ENCODE measurements at regions of chr6 and their contacts with region 1.

Region 1: DNA sequence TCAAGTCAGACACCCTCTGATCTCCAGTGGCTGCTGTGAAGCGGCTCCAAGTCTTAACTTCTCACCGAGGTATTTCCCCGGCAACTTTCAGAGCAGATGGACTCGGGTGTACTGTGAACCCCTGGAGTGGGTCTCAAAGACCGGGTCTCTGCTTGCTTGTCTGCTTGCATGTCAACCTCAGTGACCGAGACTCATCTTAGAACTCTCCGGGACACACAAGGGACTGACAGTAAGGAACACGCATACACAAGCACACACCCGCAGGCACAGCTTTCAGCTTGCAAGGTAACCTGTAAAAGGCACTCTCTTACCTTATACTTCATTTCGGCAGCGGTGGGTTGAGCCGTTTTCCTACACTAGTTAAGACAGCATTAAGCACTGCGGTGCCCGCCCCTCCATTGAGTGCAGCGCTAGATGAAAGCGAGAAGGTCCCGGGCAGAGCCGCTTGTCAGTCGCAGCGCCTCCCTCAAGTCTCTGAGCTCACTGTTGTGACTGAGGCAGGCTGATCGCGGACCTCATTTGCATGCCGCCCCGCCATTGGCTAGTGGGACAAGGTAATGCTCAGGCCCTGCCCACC is at the start of gene NEDD9:
- DNase-seq: peak; percentile 96
- ATAC-seq: peak; percentile 98 to 99 (median 98)
- H3K4me3 ChIP-seq: peak within 1 kb of the TSS; percentile 30 to 84 (median 71)
- H3K27ac ChIP-seq: peak within 1 kb of the TSS; percentile 84 to 94 (median 88)
- H3K4me1 ChIP-seq: peaks cover 0 to 56% (median 11%) of the 10 kb centered on the region in 12 donors
- H3K27me3 ChIP-seq: no peaks in the 10 kb centered on the region
- CTCF ChIP-seq: peak in 1 of 12 donors; percentile 8
- POLR2A ChIP-seq: peak; percentile 91 to 99
- total RNA-seq, gene NEDD9: 10.2 to 55.7 (median 20.9) TPM

Region 2: GRCh38 chr6:10954590-10955010 is 277.7 kb before region 1 on chr6:
- intact Hi-C with region 1: no loop called
- DNase-seq: peak; percentile 59 to 84 (median 67)
- ATAC-seq: peak in 3 of 4 donors; percentile 68 to 72 (median 71)
- H3K4me3 ChIP-seq: no peak overlapping the region
- H3K27ac ChIP-seq: no peak overlapping the region
- H3K4me1 ChIP-seq: no peaks in the 10 kb centered on the region
- H3K27me3 ChIP-seq: no peaks in the 10 kb centered on the region
- CTCF ChIP-seq: peak; percentile 50 to 81 (median 68)
- POLR2A ChIP-seq: no peak

Region 3: DNA sequence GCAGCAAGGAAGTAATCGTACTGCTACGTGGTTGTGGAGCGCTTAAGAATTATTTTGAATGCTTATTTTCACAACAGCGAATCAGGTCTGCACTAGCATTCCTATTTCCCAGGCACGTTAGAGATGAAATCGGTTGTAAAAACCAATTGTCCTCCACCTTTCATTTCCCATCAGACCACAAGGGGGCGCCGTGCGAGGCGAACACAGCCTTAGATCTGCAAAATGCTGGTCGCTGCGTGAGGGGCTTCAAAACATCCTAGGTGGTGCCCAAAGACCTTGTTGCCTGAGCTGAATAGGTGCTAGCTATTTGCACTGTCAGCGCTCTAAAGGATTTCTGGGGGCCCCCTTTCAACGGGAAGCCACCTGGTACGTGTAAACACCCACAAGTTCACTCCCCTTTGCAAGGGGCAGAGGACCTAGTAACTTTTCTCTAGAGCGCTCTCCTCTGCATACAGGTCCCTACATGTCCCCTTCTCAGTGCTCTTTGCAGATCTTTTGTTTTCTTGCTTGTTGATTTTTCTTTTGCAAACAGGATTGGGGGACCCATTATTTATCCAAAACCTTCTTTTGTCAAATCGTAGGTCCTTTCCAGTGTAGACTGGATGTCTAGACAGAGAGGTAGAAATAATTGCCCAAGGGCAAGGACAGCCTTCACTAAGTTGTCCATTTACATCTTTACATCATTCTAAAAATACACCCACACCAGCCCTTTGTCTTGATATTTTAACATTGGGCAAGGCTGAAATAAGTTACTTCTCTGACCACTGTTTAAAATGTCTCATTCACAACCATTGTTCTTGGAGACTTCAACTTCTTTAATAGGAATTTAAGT is 59.6 kb before region 1 on chr6:
- intact Hi-C with region 1: loop called in 5 of 10 experiments (anchors 2 to 10 kb)
- DNase-seq: peak; percentile 62 to 84 (median 66)
- ATAC-seq: peak in 2 of 4 donors; percentile 55 to 59
- H3K4me3 ChIP-seq: peak overlapping the region in 1 of 12 donors; percentile 11
- H3K27ac ChIP-seq: no peak overlapping the region
- H3K4me1 ChIP-seq: peaks cover 0 to 14% (median 6%) of the 10 kb centered on the region in 12 donors
- H3K27me3 ChIP-seq: no peaks in the 10 kb centered on the region
- CTCF ChIP-seq: peak; percentile 75 to 92 (median 90)
- POLR2A ChIP-seq: no peak

Region 4: GRCh38 chr6:11263291-11263775 is 31.1 kb after region 1 on chr6:
- intact Hi-C with region 1: loop called in 1 of 10 experiments (anchors 2 kb)
- DNase-seq: peak; percentile 66 to 84 (median 74)
- ATAC-seq: peak; percentile 87 to 95 (median 94)
- H3K4me3 ChIP-seq: peak overlapping the region in 1 of 12 donors; percentile 1
- H3K27ac ChIP-seq: peak overlapping the region; percentile 25 to 86 (median 72)
- H3K4me1 ChIP-seq: peaks cover 0 to 27% (median 19%) of the 10 kb centered on the region in 12 donors
- H3K27me3 ChIP-seq: no peaks in the 10 kb centered on the region
- CTCF ChIP-seq: no peak
- POLR2A ChIP-seq: no peak

Region 5: DNA sequence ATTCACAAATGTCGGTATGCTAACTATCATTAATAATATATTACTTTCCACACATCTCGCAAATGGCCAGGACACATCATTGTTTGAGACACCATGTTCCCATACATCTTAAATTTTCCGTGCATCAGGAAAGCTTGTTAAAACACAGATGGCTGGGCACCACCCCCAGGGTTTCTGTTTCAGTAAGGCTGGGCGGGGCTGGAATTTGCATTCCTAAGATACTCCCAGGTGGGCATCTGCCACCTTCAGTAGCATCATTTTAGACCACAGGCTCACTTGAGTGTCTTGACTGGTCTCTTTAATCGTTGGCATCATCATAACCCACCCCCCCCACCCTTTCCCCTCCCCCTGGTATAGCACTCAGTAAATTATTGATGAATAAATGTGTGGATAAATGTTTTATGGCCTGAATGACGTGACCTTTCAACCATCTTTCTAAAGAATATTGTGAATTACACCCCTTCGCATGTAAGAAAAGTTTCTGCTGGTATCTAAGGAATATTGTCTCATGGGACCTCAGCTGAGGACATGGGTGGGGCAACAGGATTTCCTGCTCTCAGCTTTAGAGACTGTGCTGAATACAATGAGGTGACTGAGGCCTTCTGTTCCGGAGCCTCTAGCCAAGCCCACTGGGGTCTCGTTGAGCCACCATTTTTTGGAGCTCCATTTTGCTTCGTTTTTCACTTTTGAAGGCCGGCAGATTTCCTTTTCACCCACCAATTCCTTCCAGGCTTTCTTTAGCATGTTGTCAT is 124.3 kb after region 1 on chr6:
- intact Hi-C with region 1: loop called in 5 of 10 experiments (anchors 5 to 10 kb)
- DNase-seq: peak in 4 of 5 donors; percentile 49 to 70 (median 57)
- ATAC-seq: peak; percentile 75 to 90 (median 79)
- H3K4me3 ChIP-seq: no peak overlapping the region
- H3K27ac ChIP-seq: peak overlapping the region; percentile 63 to 97 (median 90)
- H3K4me1 ChIP-seq: peaks cover 0 to 63% (median 26%) of the 10 kb centered on the region in 12 donors
- H3K27me3 ChIP-seq: no peaks in the 10 kb centered on the region
- CTCF ChIP-seq: no peak
- POLR2A ChIP-seq: no peak

Region 6: DNA sequence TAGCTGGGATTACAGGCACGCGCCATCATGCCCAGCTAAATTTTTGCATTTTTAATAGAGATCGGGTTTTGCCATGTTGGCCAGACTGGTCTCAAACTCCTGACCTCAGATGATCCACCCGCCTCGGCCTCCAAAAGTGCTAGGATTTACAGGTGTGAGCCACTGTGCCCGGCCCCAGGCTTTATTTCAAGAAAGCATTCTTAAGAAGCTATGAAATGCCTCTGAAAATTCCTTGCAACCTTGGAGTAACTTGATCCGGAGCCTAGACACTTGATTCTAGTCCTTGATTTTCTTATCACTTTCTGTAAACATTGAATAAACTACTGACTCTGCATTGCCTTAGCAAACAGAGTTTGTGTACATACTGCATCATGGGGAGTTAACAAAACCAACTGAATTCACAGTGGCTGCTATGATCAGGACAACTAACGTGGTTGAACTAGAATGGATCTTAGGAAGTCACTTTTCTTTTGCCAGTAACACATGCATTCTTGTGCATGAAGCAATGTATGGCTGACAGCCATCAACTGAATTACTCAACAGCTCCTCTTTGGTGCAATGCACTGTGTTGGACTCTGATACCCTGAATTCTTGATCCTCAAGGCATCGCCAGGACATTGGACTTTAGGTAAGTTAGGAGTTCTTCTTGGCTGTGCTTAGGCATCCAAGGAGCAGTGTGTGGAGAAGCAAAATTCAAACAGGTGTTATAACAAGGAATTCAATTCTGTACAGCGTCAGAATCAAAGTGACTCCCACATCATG is 202.5 kb after region 1 on chr6:
- intact Hi-C with region 1: loop called in 1 of 10 experiments (anchors 5 kb)
- DNase-seq: no peak
- ATAC-seq: peak in 1 of 4 donors; percentile 12
- H3K4me3 ChIP-seq: no peak overlapping the region
- H3K27ac ChIP-seq: peak overlapping the region in 3 of 12 donors; percentile 70 to 81 (median 80)
- H3K4me1 ChIP-seq: peaks cover 0 to 53% (median 20%) of the 10 kb centered on the region in 12 donors
- H3K27me3 ChIP-seq: no peaks in the 10 kb centered on the region
- CTCF ChIP-seq: no peak
- POLR2A ChIP-seq: no peak

Region 7: GRCh38 chr6:11575408-11576033 is 343.2 kb after region 1 on chr6:
- intact Hi-C with region 1: no loop called
- DNase-seq: peak in 4 of 5 donors; percentile 27 to 45 (median 39)
- ATAC-seq: peak; percentile 86 to 98 (median 96)
- H3K4me3 ChIP-seq: peak overlapping the region in 2 of 12 donors; percentile 5 to 10
- H3K27ac ChIP-seq: peak overlapping the region in 1 of 12 donors; percentile 24
- H3K4me1 ChIP-seq: peaks cover 0 to 8% (median 0%) of the 10 kb centered on the region in 12 donors
- H3K27me3 ChIP-seq: no peaks in the 10 kb centered on the region
- CTCF ChIP-seq: peak; percentile 75 to 91 (median 80)
- POLR2A ChIP-seq: no peak

Region 8: DNA sequence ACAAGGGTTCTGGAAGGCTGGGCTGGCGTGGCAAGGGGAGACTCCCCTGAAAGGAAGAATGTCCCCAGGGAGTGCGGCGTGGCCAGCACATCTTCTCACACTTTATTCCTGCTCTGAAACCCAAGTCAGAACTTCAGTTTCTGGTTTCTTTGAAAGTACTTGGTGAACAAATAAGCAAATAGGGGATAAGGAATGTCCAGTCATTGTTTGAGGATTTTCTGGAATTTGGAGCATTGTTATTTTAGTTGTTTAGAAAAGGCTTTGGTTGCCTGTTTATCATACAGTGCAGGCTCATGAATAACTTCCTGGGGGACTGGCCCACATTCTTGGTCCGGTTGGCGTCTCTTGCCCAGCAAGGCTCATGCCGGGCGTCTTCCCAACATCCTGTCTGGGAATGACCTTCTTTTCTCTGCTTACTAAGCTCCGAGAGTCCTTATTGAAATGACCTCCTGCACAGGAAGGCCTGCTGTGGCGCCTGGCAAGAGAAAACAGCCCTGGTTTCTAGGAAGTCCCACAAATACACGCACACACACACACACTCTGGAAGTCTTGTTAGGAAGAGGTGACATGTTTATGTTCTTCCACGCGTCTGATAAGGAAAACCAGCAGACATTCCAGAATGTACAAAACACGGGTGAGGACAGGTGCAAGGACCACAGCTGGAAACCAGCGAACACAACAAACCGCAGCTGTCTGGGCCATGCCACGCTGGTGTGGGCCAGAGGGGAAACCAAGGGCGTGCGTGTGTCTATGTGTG is 377.2 kb after region 1 on chr6:
- intact Hi-C with region 1: no loop called
- DNase-seq: peak; percentile 40 to 75 (median 59)
- ATAC-seq: peak; percentile 26 to 81 (median 76)
- H3K4me3 ChIP-seq: no peak overlapping the region
- H3K27ac ChIP-seq: peak overlapping the region in 10 of 12 donors; percentile 8 to 74 (median 48)
- H3K4me1 ChIP-seq: peaks cover 0 to 51% (median 37%) of the 10 kb centered on the region in 12 donors
- H3K27me3 ChIP-seq: no peaks in the 10 kb centered on the region
- CTCF ChIP-seq: no peak
- POLR2A ChIP-seq: no peak

Region 9: DNA sequence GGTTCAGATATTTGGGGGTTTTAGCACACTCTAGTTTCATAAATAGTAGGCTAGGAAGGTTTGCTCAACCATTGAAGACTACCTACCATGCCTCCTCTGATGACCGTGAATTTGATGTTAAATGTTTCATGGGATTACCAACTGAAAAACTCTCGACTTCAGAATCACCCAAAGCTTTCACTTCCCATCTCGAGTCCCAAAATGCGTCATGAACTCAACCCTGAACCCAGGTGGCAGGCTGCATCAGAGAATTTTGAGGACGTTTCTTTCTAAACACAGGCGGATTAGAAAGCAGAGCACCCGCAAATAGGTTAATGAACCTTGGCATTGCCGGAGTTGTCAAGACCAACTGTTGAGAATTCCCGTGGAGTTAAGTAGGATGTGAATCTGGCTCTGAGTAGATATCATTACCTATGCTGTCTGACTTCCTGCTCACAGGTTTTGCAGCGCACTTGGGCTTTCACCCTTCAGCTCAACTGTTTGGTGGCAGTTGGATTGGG is 644.7 kb after region 1 on chr6:
- intact Hi-C with region 1: no loop called
- DNase-seq: no peak
- ATAC-seq: no peak
- H3K4me3 ChIP-seq: no peak overlapping the region
- H3K27ac ChIP-seq: no peak overlapping the region
- H3K4me1 ChIP-seq: no peaks in the 10 kb centered on the region
- H3K27me3 ChIP-seq: no peaks in the 10 kb centered on the region
- CTCF ChIP-seq: no peak
- POLR2A ChIP-seq: no peak

Measured in heart left ventricle (tissue), 16 donors.